CD4-positive, alpha-beta memory T cell (primary cell): ENCODE measurements at regions of chr1 and their contacts with region 1.

Region 1: DNA sequence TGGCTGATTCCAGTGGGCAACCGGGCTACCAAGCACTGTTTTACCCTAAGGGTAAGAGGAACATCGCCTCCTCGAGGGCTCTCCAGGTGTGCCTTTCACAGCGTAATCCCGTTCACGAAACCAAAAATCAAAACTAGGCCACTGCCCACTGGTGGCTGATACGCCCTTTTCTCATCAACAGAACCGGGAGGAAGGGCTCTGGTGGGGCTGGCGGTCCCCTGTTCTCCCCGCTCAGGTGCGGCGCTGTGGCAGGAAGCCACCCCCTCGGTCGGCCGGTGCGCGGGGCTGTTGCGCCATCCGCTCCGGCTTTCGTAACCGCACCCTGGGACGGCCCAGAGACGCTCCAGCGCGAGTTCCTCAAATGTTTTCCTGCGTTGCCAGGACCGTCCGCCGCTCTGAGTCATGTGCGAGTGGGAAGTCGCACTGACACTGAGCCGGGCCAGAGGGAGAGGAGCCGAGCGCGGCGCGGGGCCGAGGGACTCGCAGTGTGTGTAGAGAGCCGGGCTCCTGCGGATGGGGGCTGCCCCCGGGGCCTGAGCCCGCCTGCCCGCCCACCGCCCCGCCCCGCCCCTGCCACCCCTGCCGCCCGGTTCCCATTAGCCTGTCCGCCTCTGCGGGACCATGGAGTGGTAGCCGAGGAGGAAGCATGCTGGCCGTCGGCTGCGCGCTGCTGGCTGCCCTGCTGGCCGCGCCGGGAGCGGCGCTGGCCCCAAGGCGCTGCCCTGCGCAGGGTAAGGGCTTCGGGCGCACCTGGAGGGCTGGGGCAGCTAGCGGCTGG is at the start of gene IL6R:
- DNase-seq: peak; percentile 80 to 85 (median 82)
- H3K4me3 ChIP-seq: peak within 1 kb of the TSS; percentile 71 to 84
- H3K4me3 Mint-ChIP-seq: peak within 1 kb of the TSS; percentile 93 to 99 (median 97)
- H3K27ac ChIP-seq: peak within 1 kb of the TSS; percentile 68
- H3K27ac Mint-ChIP-seq: peak within 1 kb of the TSS; percentile 92 to 97 (median 96)
- H3K4me1 ChIP-seq: peaks cover 73% of the 10 kb centered on the region
- H3K4me1 Mint-ChIP-seq: peaks cover 43 to 86% (median 64%) of the 10 kb centered on the region in 4 donors
- H3K27me3 ChIP-seq: no peaks in the 10 kb centered on the region
- H3K27me3 Mint-ChIP-seq: no peaks in the 10 kb centered on the region
- total RNA-seq, gene IL6R: 101 to 106 TPM

Region 2: GRCh38 chr1:153572569-153573015 is 832.6 kb before region 1 on chr1:
- CTCF ChIA-PET with region 1: no interaction called
- POLR2A ChIA-PET with region 1: no interaction called
- intact Hi-C with region 1: no loop called
- DNase-seq: peak in 4 of 5 donors; percentile 24 to 45 (median 30)
- H3K4me3 ChIP-seq: no peak overlapping the region
- H3K4me3 Mint-ChIP-seq: no peak overlapping the region
- H3K27ac ChIP-seq: no peak overlapping the region
- H3K27ac Mint-ChIP-seq: peak overlapping the region in 3 of 7 donors; percentile 15 to 41 (median 27)
- H3K4me1 ChIP-seq: peaks cover 14% of the 10 kb centered on the region
- H3K4me1 Mint-ChIP-seq: peaks cover 9 to 27% (median 12%) of the 10 kb centered on the region in 4 donors
- H3K27me3 ChIP-seq: no peaks in the 10 kb centered on the region
- H3K27me3 Mint-ChIP-seq: peaks cover 0 to 5% of the 10 kb centered on the region in 2 donors

Region 3: DNA sequence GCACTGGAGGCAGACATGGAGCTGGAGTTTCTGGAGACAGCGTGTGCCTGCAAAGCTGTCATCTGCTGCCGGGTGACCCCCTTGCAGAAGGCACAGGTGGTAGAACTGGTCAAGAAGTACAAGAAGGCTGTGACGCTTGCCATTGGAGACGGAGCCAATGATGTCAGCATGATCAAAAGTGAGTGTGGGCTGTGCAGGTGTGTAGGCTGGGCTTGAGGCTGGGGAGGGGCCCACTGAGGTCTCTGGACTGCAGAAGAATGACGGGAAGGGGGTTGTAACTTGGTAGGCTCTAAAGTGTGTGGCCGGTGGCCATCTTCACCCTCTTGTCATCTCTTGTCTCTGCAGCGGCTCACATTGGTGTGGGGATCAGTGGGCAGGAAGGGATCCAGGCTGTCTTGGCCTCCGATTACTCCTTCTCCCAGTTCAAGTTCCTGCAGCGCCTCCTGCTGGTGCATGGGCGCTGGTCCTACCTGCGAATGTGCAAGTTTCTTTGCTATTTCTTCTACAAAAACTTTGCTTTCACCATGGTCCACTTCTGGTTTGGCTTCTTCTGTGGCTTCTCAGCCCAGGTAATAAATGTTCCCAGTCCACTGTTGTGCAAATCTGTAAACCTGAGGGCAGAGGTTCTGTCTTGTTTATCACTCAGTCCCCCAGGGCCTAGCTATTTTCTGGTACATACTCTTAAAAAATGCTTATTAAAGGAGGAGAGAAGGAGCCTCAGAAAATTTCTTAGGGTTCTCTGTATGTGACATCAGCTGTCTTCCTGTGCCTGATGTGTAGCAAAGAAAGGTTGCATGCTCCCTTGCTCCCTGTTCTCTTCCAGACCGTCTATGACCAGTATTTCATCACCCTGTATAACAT is 60.0 kb before region 1 on chr1:
- CTCF ChIA-PET with region 1: interaction called, 14 read pairs
- POLR2A ChIA-PET with region 1: interaction called, 97 read pairs
- intact Hi-C with region 1: no loop called
- DNase-seq: peak; percentile 75 to 84 (median 81)
- H3K4me3 ChIP-seq: peak overlapping the region; percentile 62
- H3K4me3 Mint-ChIP-seq: peak overlapping the region; percentile 87 to 99 (median 94)
- H3K27ac ChIP-seq: peak overlapping the region; percentile 66
- H3K27ac Mint-ChIP-seq: peak overlapping the region; percentile 86 to 98 (median 92)
- H3K4me1 ChIP-seq: peaks cover 96% of the 10 kb centered on the region
- H3K4me1 Mint-ChIP-seq: peaks cover 54 to 98% (median 76%) of the 10 kb centered on the region in 4 donors
- H3K27me3 ChIP-seq: no peaks in the 10 kb centered on the region
- H3K27me3 Mint-ChIP-seq: no peaks in the 10 kb centered on the region

Region 4: GRCh38 chr1:154386643-154387352 is 18.4 kb before region 1 on chr1:
- CTCF ChIA-PET with region 1: interaction called, 36 read pairs
- POLR2A ChIA-PET with region 1: interaction called, 116 read pairs
- intact Hi-C with region 1: loop called (anchors 1 kb)
- DNase-seq: peak in 4 of 5 donors; percentile 43 to 86 (median 58)
- H3K4me3 ChIP-seq: peak overlapping the region in 1 of 2 donors; percentile 34
- H3K4me3 Mint-ChIP-seq: peak overlapping the region; percentile 79 to 88 (median 85)
- H3K27ac ChIP-seq: peak overlapping the region; percentile 67
- H3K27ac Mint-ChIP-seq: peak overlapping the region; percentile 88 to 99 (median 97)
- H3K4me1 ChIP-seq: peaks cover 36% of the 10 kb centered on the region
- H3K4me1 Mint-ChIP-seq: peaks cover 22 to 34% (median 28%) of the 10 kb centered on the region in 4 donors
- H3K27me3 ChIP-seq: no peaks in the 10 kb centered on the region
- H3K27me3 Mint-ChIP-seq: no peaks in the 10 kb centered on the region

Region 5: GRCh38 chr1:154442006-154442740 is 37.0 kb after region 1 on chr1:
- CTCF ChIA-PET with region 1: interaction called, 12 read pairs
- POLR2A ChIA-PET with region 1: interaction called, 145 read pairs
- intact Hi-C with region 1: loop called (anchors 1 kb)
- DNase-seq: no peak
- H3K4me3 ChIP-seq: no peak overlapping the region
- H3K4me3 Mint-ChIP-seq: peak overlapping the region; percentile 32 to 87 (median 76)
- H3K27ac ChIP-seq: peak overlapping the region; percentile 47
- H3K27ac Mint-ChIP-seq: peak overlapping the region; percentile 81 to 99 (median 94)
- H3K4me1 ChIP-seq: peaks cover 69% of the 10 kb centered on the region
- H3K4me1 Mint-ChIP-seq: peaks cover 47 to 75% (median 64%) of the 10 kb centered on the region in 4 donors
- H3K27me3 ChIP-seq: no peaks in the 10 kb centered on the region
- H3K27me3 Mint-ChIP-seq: no peaks in the 10 kb centered on the region

Region 6: DNA sequence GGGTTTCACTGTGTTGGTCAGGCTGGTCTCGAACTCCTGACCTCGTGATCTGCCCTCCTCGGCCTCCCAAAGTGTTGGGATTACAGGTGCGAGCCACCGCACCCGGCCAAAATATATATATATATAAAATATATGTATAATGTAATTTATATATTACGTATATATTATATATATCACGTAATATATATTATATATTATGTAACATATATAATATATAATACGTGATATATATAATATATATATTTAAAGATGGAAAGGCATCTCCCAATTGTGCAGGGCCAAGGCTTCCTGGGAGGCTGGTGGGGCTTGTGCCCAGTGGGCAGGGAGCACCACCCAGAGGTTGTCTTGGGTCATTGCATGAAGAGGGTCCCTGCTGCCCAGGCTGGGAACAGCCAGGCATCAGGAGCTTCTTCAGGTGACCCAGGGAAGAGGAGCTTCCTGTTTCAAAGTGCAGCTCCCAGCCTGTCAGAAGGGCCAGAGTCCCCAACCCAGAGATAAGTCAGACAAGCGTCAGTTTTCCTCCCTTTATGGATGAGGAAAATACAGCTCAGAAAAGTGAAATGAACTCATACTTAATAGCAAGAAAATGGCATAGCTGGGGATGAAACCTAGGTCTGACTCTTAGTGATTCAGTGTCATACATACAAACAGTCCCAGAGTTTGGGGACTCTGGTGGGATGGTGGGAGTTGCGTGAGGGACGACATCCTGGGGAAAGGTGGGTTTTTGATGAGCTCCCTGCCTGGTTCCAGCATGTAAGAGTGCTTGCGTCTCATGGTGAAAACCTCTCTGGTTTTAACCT is 141.3 kb after region 1 on chr1:
- CTCF ChIA-PET with region 1: interaction called, 4 read pairs
- POLR2A ChIA-PET with region 1: no interaction called
- intact Hi-C with region 1: loop called (anchors 2 kb)
- DNase-seq: peak; percentile 36 to 53 (median 47)
- H3K4me3 ChIP-seq: no peak overlapping the region
- H3K4me3 Mint-ChIP-seq: no peak overlapping the region
- H3K27ac ChIP-seq: no peak overlapping the region
- H3K27ac Mint-ChIP-seq: peak overlapping the region in 4 of 7 donors; percentile 25 to 67 (median 43)
- H3K4me1 ChIP-seq: peaks cover 13% of the 10 kb centered on the region
- H3K4me1 Mint-ChIP-seq: peaks cover 7 to 21% (median 13%) of the 10 kb centered on the region in 4 donors
- H3K27me3 ChIP-seq: no peaks in the 10 kb centered on the region
- H3K27me3 Mint-ChIP-seq: no peaks in the 10 kb centered on the region